IMR-90 (cell line): ENCODE measurements at regions of chr3 and their contacts with region 1.

Region 1: DNA sequence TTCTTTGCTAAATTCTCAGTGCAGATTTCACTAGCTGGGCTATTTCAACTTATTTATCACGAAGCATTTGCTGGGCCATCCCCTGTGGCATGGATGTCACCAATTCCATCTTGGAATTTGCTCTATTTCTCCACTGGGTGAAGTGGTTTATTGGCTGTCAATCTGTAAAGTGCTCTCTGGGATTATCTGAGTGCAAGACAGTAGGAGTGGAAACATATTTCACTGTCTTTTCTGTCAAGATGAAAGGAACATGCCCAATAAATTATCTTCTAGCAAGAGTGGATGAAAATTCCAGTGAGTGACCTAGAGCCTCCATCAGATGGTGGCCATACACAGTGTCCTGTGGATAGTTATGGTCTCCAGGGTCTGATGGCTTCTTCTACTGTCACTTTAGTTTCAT is 25.1 kb upstream of the CTDSPL start:
- DNase-seq: no peak
- ATAC-seq: no peak
- H3K4me3 ChIP-seq: no peak overlapping the region
- H3K27ac ChIP-seq: no peak overlapping the region
- H3K4me1 ChIP-seq: no peaks in the 10 kb centered on the region
- H3K27me3 ChIP-seq: no peaks in the 10 kb centered on the region
- CTCF ChIP-seq: no peak
- POLR2A ChIP-seq: no peak
- RAD21 ChIP-seq: no peak

Region 2: DNA sequence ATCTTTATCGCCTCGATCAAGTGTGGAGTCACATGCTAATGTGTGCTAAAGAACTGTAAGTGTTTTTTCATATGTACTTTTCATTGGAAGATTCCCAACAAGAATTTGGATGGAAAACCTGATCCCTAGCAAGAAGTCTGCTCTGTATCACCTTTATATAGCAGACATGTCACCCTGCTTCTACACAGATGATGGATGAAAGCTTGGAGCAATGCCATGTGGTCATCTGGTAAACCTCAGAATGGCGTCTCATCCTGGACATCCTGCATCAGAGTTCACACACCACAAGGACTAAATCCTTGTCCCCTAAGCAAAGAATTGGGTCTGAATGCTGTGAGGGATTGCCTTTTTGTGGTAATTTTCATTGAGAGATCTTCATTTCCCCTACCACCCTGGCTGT is 17.0 kb before region 1 on chr3:
- CTCF ChIA-PET with region 1: interaction called, 5 read pairs
- POLR2A ChIA-PET with region 1: no interaction called
- dilution Hi-C with region 1: no loop called
- in situ Hi-C with region 1: no loop called
- intact Hi-C with region 1: loop called (anchors 1 kb)
- DNase-seq: no peak
- ATAC-seq: no peak
- H3K4me3 ChIP-seq: no peak overlapping the region
- H3K27ac ChIP-seq: no peak overlapping the region
- H3K4me1 ChIP-seq: peaks cover 5% of the 10 kb centered on the region; the same call in 1 of the 2 replicates
- H3K27me3 ChIP-seq: no peaks in the 10 kb centered on the region
- CTCF ChIP-seq: no peak
- POLR2A ChIP-seq: no peak
- RAD21 ChIP-seq: no peak